ENCODE measurements at regions of chr5 and their contacts with region 1.

Region 1: GRCh38 chr5:151659001-151659754 is 27.5 kb downstream of the SPARC start:
- DNase-seq: peak; percentile 91
- ATAC-seq: peak; percentile 97
- H3K4me3 Mint-ChIP-seq: no peak overlapping the region
- H3K27ac Mint-ChIP-seq: no peak overlapping the region
- H3K4me1 Mint-ChIP-seq: peaks cover 14% of the 10 kb centered on the region
- H3K27me3 Mint-ChIP-seq: peaks cover 1% of the 10 kb centered on the region

Region 2: DNA sequence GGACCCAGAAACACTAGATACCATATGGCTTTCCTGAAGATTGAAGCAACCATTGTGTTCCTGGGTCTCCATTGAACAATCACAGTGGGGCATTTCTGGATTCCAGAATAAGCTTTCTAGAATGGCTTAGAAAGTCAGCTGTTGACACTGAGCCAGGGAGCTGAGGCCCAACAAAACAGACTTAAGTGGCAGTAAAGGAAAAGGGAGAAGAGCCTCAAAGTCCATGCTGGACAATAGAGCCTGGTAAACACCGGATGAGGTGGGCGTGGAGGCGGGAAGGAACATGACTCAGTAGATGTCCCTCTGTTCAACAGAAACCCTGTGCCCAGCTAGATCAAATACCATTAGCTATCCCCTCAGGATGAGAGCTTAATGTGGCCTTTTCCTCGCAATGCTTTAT is 12.8 kb after region 1 on chr5:
- CTCF ChIA-PET with region 1: interaction called, 19 read pairs
- POLR2A ChIA-PET with region 1: no interaction called
- intact Hi-C with region 1: no loop called
- DNase-seq: no peak
- ATAC-seq: no peak
- H3K4me3 Mint-ChIP-seq: no peak overlapping the region
- H3K27ac Mint-ChIP-seq: no peak overlapping the region
- H3K4me1 Mint-ChIP-seq: peaks cover 2% of the 10 kb centered on the region
- H3K27me3 Mint-ChIP-seq: no peaks in the 10 kb centered on the region

Region 3: DNA sequence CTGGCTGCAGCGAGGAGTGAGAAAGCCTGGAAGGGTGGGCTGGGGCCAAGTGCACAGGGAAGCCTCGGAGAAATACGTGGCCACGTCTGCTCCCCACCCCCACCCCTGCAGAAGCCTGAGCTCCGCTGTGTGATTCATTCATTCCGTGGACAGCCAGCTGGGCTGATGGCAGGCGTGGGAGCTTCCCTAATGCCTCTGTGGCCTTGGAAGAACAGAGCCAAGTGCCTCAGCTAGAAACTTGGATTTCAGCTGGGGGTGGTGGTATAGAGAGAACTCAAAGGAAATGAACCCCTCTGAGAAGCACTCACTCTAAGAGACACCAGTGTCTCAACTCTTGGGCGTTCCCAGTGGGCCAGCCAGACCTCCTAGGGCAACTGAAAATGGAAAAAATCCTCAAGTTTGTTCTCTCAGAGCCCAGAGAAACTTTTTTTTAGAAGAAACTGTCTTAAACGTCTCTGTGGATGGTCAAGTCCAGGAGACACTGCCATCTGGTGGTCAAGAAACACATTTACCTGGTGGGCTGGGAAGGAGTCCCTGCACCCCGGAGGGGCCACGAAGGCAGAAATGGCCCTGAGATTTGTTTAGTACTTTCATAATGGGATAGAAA is 81.3 kb after region 1 on chr5:
- CTCF ChIA-PET with region 1: interaction called, 45 read pairs
- POLR2A ChIA-PET with region 1: no interaction called
- intact Hi-C with region 1: loop called (anchors 1 kb)
- DNase-seq: peak; percentile 65
- ATAC-seq: peak; percentile 72
- H3K4me3 Mint-ChIP-seq: no peak overlapping the region
- H3K27ac Mint-ChIP-seq: no peak overlapping the region
- H3K4me1 Mint-ChIP-seq: peaks cover 14% of the 10 kb centered on the region
- H3K27me3 Mint-ChIP-seq: no peaks in the 10 kb centered on the region

Region 4: GRCh38 chr5:152142840-152143469 is 483.8 kb after region 1 on chr5:
- CTCF ChIA-PET with region 1: interaction called, 10 read pairs
- POLR2A ChIA-PET with region 1: no interaction called
- intact Hi-C with region 1: loop called (anchors 1 to 2 kb)
- DNase-seq: peak; percentile 78
- ATAC-seq: peak; percentile 81
- H3K4me3 Mint-ChIP-seq: no peak overlapping the region
- H3K27ac Mint-ChIP-seq: no peak overlapping the region
- H3K4me1 Mint-ChIP-seq: no peaks in the 10 kb centered on the region
- H3K27me3 Mint-ChIP-seq: no peaks in the 10 kb centered on the region

Region 5: GRCh38 chr5:152505442-152506042 is 846.4 kb after region 1 on chr5:
- CTCF ChIA-PET with region 1: no interaction called
- POLR2A ChIA-PET with region 1: no interaction called
- intact Hi-C with region 1: loop called in 1 of 2 experiments (anchors 5 kb)
- DNase-seq: peak; percentile 69
- ATAC-seq: peak; percentile 84
- H3K4me3 Mint-ChIP-seq: no peak overlapping the region
- H3K27ac Mint-ChIP-seq: no peak overlapping the region
- H3K4me1 Mint-ChIP-seq: no peaks in the 10 kb centered on the region
- H3K27me3 Mint-ChIP-seq: peaks cover 20% of the 10 kb centered on the region

Measured in activated CD4-positive, alpha-beta T cell treated with anti-CD3 and anti-CD28 coated beads for 36 hours (primary cell).